ENCODE measurements at regions of chr1 and their contacts with region 1.

Region 1: GRCh38 chr1:147273409-147274336 is 31.2 kb downstream of the CHD1L start:
- DNase-seq: peak; percentile 29
- ATAC-seq: peak; percentile 73
- H3K4me3 ChIP-seq: no peak overlapping the region
- H3K27ac ChIP-seq: no peak overlapping the region
- H3K4me1 ChIP-seq: peaks cover 2 to 9% of the 10 kb centered on the region in 2 experiments; a peak in 2 of 4 replicates
- H3K27me3 ChIP-seq: no peaks in the 10 kb centered on the region
- CTCF ChIP-seq: peak; percentile 25 to 63 (median 37); a peak in 5 of 6 replicates
- POLR2A ChIP-seq: no peak
- RAD21 ChIP-seq: peak; percentile 61

Region 2: DNA sequence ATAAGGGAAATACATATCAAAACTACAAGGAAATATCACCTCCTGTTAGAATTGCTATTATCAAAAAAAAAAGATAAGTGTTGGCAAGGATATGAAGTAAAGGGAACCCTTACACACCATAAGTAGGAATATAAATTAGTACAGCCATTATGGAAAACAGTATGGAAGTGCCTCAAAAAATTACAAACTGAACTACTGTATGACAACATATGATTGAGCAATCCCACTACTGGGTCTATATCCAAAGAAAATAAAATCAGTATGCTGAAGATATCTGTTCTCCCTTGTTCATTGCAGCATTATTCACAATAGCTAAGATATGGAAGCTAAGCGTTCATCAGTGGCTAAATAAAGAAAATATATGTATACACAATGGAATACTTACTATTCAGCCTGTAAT is 28.6 kb after region 1 on chr1:
- CTCF ChIA-PET with region 1: no interaction called
- POLR2A ChIA-PET with region 1: no interaction called
- RAD21 ChIA-PET with region 1: no interaction called
- intact Hi-C with region 1: no loop called
- DNase-seq: no peak
- ATAC-seq: no peak
- H3K4me3 ChIP-seq: no peak overlapping the region
- H3K27ac ChIP-seq: no peak overlapping the region
- H3K4me1 ChIP-seq: no peaks in the 10 kb centered on the region
- H3K27me3 ChIP-seq: no peaks in the 10 kb centered on the region
- CTCF ChIP-seq: no peak
- POLR2A ChIP-seq: no peak
- RAD21 ChIP-seq: no peak

Region 3: GRCh38 chr1:147389532-147390524 is 116.2 kb after region 1 on chr1:
- CTCF ChIA-PET with region 1: interaction called, 25 read pairs
- POLR2A ChIA-PET with region 1: no interaction called
- RAD21 ChIA-PET with region 1: interaction called, 3 to 6 read pairs
- intact Hi-C with region 1: loop called (anchors 2 kb)
- DNase-seq: peak; percentile 27
- ATAC-seq: peak; percentile 89
- H3K4me3 ChIP-seq: no peak overlapping the region
- H3K27ac ChIP-seq: no peak overlapping the region
- H3K4me1 ChIP-seq: no peaks in the 10 kb centered on the region
- H3K27me3 ChIP-seq: no peaks in the 10 kb centered on the region
- CTCF ChIP-seq: peak; percentile 32 to 77 (median 72); a peak in 5 of 6 replicates
- POLR2A ChIP-seq: no peak
- RAD21 ChIP-seq: peak; percentile 66

Region 4: DNA sequence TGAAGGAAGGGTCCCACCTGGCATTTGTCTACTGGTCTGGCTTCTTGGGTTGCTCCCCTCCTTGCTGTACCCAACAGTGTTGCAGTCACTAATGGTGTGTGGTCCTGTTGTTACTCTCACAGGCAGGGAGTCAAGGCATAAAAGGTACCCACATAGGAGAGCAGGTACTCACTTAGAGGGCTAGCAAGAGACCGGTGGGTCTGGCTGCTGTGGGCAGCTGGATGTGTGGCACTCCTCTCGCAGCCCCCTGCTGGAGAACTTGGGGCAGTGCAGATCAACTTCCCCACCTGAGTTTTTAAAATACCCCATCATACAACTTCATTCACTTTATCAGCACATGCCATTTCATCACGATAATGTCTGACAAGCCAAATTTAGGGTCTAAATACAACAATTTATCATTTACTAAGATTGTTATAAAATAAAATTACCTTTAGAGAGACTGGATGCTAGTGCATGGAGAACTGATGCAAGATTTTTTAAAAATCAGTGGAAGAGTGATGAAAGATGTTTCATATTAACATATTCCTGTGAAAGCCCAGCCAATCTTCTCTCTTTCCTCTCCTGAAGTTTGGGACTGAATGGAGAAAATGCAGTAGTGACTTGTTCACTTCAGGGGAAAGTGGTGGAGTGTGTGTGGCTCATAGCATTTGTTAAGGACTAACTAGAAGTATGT is 353.9 kb after region 1 on chr1:
- CTCF ChIA-PET with region 1: no interaction called
- POLR2A ChIA-PET with region 1: no interaction called
- RAD21 ChIA-PET with region 1: no interaction called
- intact Hi-C with region 1: loop called (anchors 5 kb)
- DNase-seq: peak; percentile 13
- ATAC-seq: peak; percentile 89
- H3K4me3 ChIP-seq: no peak overlapping the region
- H3K27ac ChIP-seq: no peak overlapping the region
- H3K4me1 ChIP-seq: no peaks in the 10 kb centered on the region
- H3K27me3 ChIP-seq: no peaks in the 10 kb centered on the region
- CTCF ChIP-seq: peak; percentile 64 to 90 (median 86)
- POLR2A ChIP-seq: no peak
- RAD21 ChIP-seq: peak; percentile 68

Region 5: GRCh38 chr1:147640553-147641165 is 367.0 kb after region 1 on chr1:
- CTCF ChIA-PET with region 1: no interaction called
- POLR2A ChIA-PET with region 1: no interaction called
- RAD21 ChIA-PET with region 1: no interaction called
- intact Hi-C with region 1: loop called (anchors 5 kb)
- DNase-seq: peak; percentile 44
- ATAC-seq: peak; percentile 99
- H3K4me3 ChIP-seq: no peak overlapping the region
- H3K27ac ChIP-seq: no peak overlapping the region
- H3K4me1 ChIP-seq: peaks cover 0 to 11% of the 10 kb centered on the region in 2 experiments; a peak in 1 of 4 replicates
- H3K27me3 ChIP-seq: no peaks in the 10 kb centered on the region
- CTCF ChIP-seq: peak; percentile 58 to 96 (median 84)
- POLR2A ChIP-seq: no peak
- RAD21 ChIP-seq: peak; percentile 50; the same call in 1 of the 2 replicates